A549 (cell line): ENCODE measurements at regions of chr19 and their contacts with region 1.

Region 1: GRCh38 chr19:54189735-54190502 is 539 bp upstream of the MBOAT7 start:
- DNase-seq: peak; percentile 96 to 100
- ATAC-seq: peak; percentile 63 to 78
- H3K4me3 ChIP-seq: peak overlapping the region; percentile 80
- H3K27ac ChIP-seq: peak overlapping the region; percentile 94 to 95
- H3K4me1 ChIP-seq: peaks cover 23% of the 10 kb centered on the region
- CTCF ChIP-seq: no peak
- EP300 ChIP-seq: no peak
- POLR2A ChIP-seq: peak; percentile 51
- RAD21 ChIP-seq: no peak

Region 2: DNA sequence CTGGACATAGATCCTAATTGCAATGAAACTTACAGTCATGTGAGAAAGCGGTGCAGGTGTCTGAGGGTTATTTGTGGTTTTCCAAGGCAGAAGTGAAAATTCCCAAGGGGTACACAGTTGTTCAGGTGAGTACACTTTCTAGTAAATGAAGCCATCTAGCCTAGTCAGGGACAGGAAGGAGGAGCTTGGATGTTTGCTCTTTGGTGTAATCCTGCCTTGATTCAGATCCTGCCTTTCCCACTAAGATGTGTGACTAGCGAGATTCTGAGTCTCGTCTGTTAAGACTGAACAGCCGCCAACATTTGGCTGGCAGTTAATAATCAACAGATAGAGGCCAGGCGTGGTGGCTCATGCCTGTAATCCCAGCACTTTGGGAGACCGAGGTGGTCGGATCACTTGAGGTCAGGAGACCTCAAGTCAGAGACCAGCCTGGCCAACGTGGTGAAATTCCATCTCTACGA is 13.3 kb after region 1 on chr19:
- CTCF ChIA-PET with region 1: interaction called, 14 read pairs
- POLR2A ChIA-PET with region 1: interaction called, 132 read pairs
- DNase-seq: peak in 1 of 2 experiments; percentile 49
- ATAC-seq: no peak
- H3K4me3 ChIP-seq: peak overlapping the region; percentile 95
- H3K27ac ChIP-seq: peak overlapping the region; percentile 92 to 97
- H3K4me1 ChIP-seq: peaks cover 67% of the 10 kb centered on the region
- CTCF ChIP-seq: no peak
- EP300 ChIP-seq: no peak
- POLR2A ChIP-seq: no peak
- RAD21 ChIP-seq: no peak

Region 3: DNA sequence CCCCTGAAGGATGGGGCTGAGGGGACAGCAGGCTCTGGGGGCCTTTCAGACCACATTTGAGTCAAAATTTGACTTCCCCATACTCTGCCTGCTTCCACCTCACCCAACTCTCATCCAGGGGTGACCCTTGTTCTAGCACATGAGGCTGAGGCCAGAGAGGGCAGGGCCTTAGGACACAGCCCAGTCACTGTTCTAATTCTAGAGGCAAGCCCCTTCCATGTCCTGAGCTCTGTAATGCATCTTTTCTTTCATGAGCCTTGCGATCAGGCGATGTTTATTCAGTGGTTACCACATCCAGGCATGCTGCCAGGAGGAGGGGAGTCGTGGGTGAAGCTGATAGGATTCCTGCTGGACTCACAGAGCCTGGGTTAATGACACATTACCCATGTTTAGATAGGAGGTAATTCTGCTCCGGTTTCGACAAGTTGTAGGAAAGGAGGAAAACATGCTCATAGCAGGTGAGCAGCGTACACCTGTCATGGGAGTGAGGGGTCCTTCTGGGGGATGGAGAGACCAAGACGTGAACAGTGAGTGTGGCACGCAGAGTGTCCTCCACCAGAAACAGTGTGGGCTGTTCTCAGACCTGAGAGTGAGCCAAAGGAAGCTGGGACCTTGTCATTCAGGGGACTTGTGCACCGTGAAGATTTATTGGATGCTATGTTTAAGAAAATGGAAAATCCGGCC is 20.0 kb after region 1 on chr19:
- CTCF ChIA-PET with region 1: interaction called, 8 read pairs
- POLR2A ChIA-PET with region 1: interaction called, 55 read pairs
- DNase-seq: peak; percentile 90 to 93
- ATAC-seq: peak; percentile 60 to 74
- H3K4me3 ChIP-seq: 0 out of 3 replicates have a peak overlapping the region, but pooled peaks have one; percentile 5
- H3K27ac ChIP-seq: peak overlapping the region; percentile 31 to 68; a peak in 5 of 6 replicates
- H3K4me1 ChIP-seq: peaks cover 64% of the 10 kb centered on the region
- CTCF ChIP-seq: no peak
- EP300 ChIP-seq: no peak
- POLR2A ChIP-seq: no peak
- RAD21 ChIP-seq: no peak